Activated CD4-positive, alpha-beta memory T cell treated with anti-CD3 and anti-CD28 coated beads, Interleukin-2, amount 10 ng/mL, durations not matched to agents 7 days and 5 days (primary cell): ENCODE measurements at regions of chr1 and their contacts with region 1.

Region 1: DNA sequence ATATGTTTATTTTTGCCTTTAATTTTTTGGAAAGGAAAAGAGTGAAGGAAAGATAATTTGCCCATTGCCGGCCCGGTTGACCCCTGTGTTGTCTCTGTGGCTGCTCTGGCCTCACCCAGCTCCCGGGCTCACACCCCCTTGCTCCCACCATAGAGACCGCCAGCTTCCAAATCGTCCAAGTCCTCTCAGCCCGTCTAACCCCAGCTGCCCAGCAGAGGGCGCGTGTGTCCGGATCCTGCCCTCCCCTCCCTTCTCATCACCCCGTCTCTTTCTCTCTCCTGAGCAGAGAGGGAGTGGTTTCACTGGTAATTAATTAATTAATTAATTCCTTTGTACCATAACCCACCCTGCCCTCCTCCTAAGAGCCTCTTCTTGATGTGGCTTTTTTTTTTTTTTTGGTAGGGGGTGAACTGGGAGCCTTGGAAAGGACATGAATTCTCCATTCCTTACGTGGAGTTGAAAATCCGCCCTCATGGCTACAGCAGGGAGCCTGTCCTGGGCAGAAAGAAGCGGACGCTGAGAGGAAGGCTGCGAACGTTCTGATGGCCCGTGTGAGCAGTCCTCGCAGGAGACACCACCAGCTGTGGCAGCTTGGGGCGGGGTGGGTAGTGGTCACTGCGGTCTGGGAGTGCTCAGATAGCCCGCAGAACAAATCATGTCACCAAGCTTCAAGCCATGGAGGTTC is 45.9 kb downstream of the KIAA0040 start:
- DNase-seq: peak; percentile 70
- H3K4me3 Mint-ChIP-seq: no peak overlapping the region
- H3K27ac Mint-ChIP-seq: no peak overlapping the region
- H3K4me1 Mint-ChIP-seq: peaks cover 7% of the 10 kb centered on the region
- H3K27me3 Mint-ChIP-seq: peaks cover 27% of the 10 kb centered on the region

Region 2: DNA sequence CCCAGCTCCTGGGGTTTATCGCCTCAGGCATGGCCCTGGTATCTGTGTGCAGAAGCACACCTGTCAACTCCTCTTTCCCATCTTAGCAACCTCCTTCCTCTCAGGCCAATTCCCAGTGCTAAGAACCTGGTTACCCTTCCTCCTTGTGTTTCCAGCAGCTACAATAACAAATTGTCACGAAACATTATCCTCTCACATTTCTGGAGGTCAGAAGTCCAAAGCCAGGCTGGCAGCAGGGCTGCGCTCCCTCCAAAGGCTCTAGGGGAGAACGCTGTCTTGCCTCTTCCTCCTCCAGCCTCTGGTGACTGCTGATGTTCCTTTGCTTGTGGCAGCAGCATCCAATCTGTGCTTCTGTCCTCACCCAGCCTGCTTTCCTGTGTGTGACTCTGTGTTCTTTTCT is 112.7 kb before region 1 on chr1:
- CTCF ChIA-PET with region 1: interaction called, 32 read pairs
- POLR2A ChIA-PET with region 1: no interaction called
- DNase-seq: no peak
- H3K4me3 Mint-ChIP-seq: no peak overlapping the region
- H3K27ac Mint-ChIP-seq: no peak overlapping the region
- H3K4me1 Mint-ChIP-seq: peaks cover 8% of the 10 kb centered on the region
- H3K27me3 Mint-ChIP-seq: peaks cover 1% of the 10 kb centered on the region

Region 3: GRCh38 chr1:175132436-175132835 is 14.2 kb before region 1 on chr1:
- CTCF ChIA-PET with region 1: interaction called, 20 read pairs
- POLR2A ChIA-PET with region 1: interaction called, 5 read pairs
- DNase-seq: no peak
- H3K4me3 Mint-ChIP-seq: no peak overlapping the region
- H3K27ac Mint-ChIP-seq: no peak overlapping the region
- H3K4me1 Mint-ChIP-seq: no peaks in the 10 kb centered on the region
- H3K27me3 Mint-ChIP-seq: peaks cover 29% of the 10 kb centered on the region